ENCODE measurements at regions of chr20 and their contacts with region 1.

Region 1: GRCh38 chr20:18587665-18588573 is at the start of gene DTD1:
- DNase-seq: peak; percentile 57
- ATAC-seq: peak; percentile 94
- H3K4me3 ChIP-seq: peak within 1 kb of the TSS; percentile 92
- H3K27ac ChIP-seq: peak within 1 kb of the TSS; percentile 65
- H3K4me1 ChIP-seq: no peaks in the 10 kb centered on the region
- H3K27me3 ChIP-seq: no peaks in the 10 kb centered on the region
- CTCF ChIP-seq: peak; percentile 56 to 73 (median 63)
- EP300 ChIP-seq: no peak
- POLR2A ChIP-seq: peak; percentile 90
- RAD21 ChIP-seq: no peak
- polyA plus RNA-seq, gene DTD1: 24.3 to 35.5 TPM

Region 2: GRCh38 chr20:18566892-18567742 is 20.8 kb before region 1 on chr20 and contains the start of gene SMIM26:
- CTCF ChIA-PET with region 1: interaction called, 4 read pairs
- POLR2A ChIA-PET with region 1: interaction called, 4 read pairs
- RAD21 ChIA-PET with region 1: interaction called, 3 read pairs
- SMC1A ChIA-PET with region 1: no interaction called
- in situ Hi-C with region 1: no loop called
- intact Hi-C with region 1: loop called (anchors 2 kb)
- DNase-seq: peak; percentile 80
- ATAC-seq: peak; percentile 100
- H3K4me3 ChIP-seq: peak within 1 kb of the TSS; percentile 98
- H3K27ac ChIP-seq: peak within 1 kb of the TSS; percentile 78
- H3K4me1 ChIP-seq: peaks cover 4% of the 10 kb centered on the region; the same call in 1 of the 2 replicates
- H3K27me3 ChIP-seq: no peaks in the 10 kb centered on the region
- CTCF ChIP-seq: no peak
- EP300 ChIP-seq: no peak
- POLR2A ChIP-seq: peak; percentile 97
- RAD21 ChIP-seq: no peak
- polyA plus RNA-seq, gene SMIM26: 303 to 329 TPM

Measured in GM12878 (cell line).